Sciatic nerve (tissue), 2 donors: ENCODE measurements at regions of chr7 and their contacts with region 1.

Region 1: GRCh38 chr7:134432296-134433152 is 26.4 kb downstream of the AKR1B1 start:
- DNase-seq: peak; percentile 91
- ATAC-seq: peak; percentile 98

Region 2: DNA sequence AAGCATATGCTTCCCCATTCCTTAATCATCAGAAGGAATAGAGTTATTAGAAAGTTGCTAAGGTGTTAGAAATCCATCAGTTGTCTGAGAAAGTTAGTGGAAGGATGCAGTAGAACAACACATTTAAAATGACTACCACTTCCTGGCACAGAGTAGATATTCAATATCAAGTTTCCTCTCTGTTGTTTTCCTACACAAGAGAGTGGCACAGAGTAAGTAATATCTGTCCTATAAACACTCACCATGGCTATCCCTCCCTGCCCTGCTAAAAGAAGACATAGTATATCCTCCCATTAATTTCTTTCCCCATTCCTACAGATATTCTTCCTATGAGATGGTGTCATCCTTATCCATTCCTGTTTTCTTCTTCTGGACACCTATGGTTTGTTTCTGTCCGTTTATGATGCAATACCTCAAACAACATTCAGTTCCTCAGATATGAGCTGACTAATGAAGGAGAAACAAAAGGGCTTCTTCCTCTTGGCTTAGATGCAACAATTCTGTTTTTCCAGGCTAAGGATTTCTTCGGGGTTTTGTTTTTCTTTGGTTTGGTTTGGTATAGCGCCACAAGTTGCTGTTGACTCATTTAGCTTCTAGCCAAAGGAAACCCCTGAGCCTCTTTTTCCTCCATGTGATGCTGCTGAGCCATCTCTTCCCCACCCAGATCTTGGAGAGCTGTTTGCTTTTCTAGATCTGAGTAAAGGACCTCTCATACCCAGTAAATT is 181.3 kb after region 1 on chr7:
- intact Hi-C with region 1: loop called (anchors 10 kb)
- DNase-seq: no peak
- ATAC-seq: peak; percentile 95

Region 3: GRCh38 chr7:134724606-134725005 is 292.1 kb after region 1 on chr7:
- intact Hi-C with region 1: no loop called
- DNase-seq: no peak
- ATAC-seq: no peak

Region 4: GRCh38 chr7:135326636-135327280 is 894.2 kb after region 1 on chr7:
- intact Hi-C with region 1: loop called (anchors 5 kb)
- DNase-seq: no peak
- ATAC-seq: no peak